ENCODE measurements at regions of chr7 and their contacts with region 1.

Region 1: GRCh38 chr7:66114793-66115649 is at the start of gene CRCP:
- DNase-seq: peak; percentile 77 to 82
- H3K4me3 ChIP-seq: peak within 1 kb of the TSS; percentile 83
- H3K27ac ChIP-seq: peak within 1 kb of the TSS; percentile 80
- H3K4me1 ChIP-seq: peaks cover 24% of the 10 kb centered on the region
- H3K27me3 ChIP-seq: no peaks in the 10 kb centered on the region
- CTCF ChIP-seq: no peak
- total RNA-seq, gene CRCP: 32.4 and 37.1 TPM in 2 replicates

Region 2: GRCh38 chr7:65981965-65982792 is 132.8 kb before region 1 on chr7 and contains the start of gene GUSB:
- CTCF ChIA-PET with region 1: no interaction called
- POLR2A ChIA-PET with region 1: no interaction called
- intact Hi-C with region 1: loop called (anchors 5 kb)
- DNase-seq: peak; percentile 72 to 91
- H3K4me3 ChIP-seq: peak within 1 kb of the TSS; percentile 80
- H3K27ac ChIP-seq: peak within 1 kb of the TSS; percentile 23; the same call in 1 of the 2 replicates
- H3K4me1 ChIP-seq: peaks cover 25% of the 10 kb centered on the region
- H3K27me3 ChIP-seq: no peaks in the 10 kb centered on the region
- CTCF ChIP-seq: no peak
- total RNA-seq, gene GUSB: 59.8 and 80.8 TPM in 2 replicates

Region 3: GRCh38 chr7:66043681-66044497 is 71.1 kb before region 1 on chr7:
- CTCF ChIA-PET with region 1: no interaction called
- POLR2A ChIA-PET with region 1: no interaction called
- intact Hi-C with region 1: loop called (anchors 2 kb)
- DNase-seq: peak in 1 of 2 experiments; percentile 73
- H3K4me3 ChIP-seq: peak overlapping the region; percentile 47; the same call in 1 of the 2 replicates
- H3K27ac ChIP-seq: no peak overlapping the region
- H3K4me1 ChIP-seq: peaks cover 13% of the 10 kb centered on the region
- H3K27me3 ChIP-seq: no peaks in the 10 kb centered on the region
- CTCF ChIP-seq: no peak

Region 4: GRCh38 chr7:66070222-66070621 is 44.8 kb before region 1 on chr7:
- CTCF ChIA-PET with region 1: no interaction called
- POLR2A ChIA-PET with region 1: interaction called, 13 read pairs
- intact Hi-C with region 1: no loop called
- DNase-seq: no peak
- H3K4me3 ChIP-seq: no peak overlapping the region
- H3K27ac ChIP-seq: no peak overlapping the region
- H3K4me1 ChIP-seq: no peaks in the 10 kb centered on the region
- H3K27me3 ChIP-seq: no peaks in the 10 kb centered on the region
- CTCF ChIP-seq: no peak

Region 5: GRCh38 chr7:66082083-66082482 is 32.9 kb before region 1 on chr7:
- CTCF ChIA-PET with region 1: no interaction called
- POLR2A ChIA-PET with region 1: interaction called, 25 read pairs
- intact Hi-C with region 1: no loop called
- DNase-seq: no peak
- H3K4me3 ChIP-seq: no peak overlapping the region
- H3K27ac ChIP-seq: no peak overlapping the region
- H3K4me1 ChIP-seq: peaks cover 1% of the 10 kb centered on the region; the same call in 1 of the 2 replicates
- H3K27me3 ChIP-seq: no peaks in the 10 kb centered on the region
- CTCF ChIP-seq: no peak

Region 6: DNA sequence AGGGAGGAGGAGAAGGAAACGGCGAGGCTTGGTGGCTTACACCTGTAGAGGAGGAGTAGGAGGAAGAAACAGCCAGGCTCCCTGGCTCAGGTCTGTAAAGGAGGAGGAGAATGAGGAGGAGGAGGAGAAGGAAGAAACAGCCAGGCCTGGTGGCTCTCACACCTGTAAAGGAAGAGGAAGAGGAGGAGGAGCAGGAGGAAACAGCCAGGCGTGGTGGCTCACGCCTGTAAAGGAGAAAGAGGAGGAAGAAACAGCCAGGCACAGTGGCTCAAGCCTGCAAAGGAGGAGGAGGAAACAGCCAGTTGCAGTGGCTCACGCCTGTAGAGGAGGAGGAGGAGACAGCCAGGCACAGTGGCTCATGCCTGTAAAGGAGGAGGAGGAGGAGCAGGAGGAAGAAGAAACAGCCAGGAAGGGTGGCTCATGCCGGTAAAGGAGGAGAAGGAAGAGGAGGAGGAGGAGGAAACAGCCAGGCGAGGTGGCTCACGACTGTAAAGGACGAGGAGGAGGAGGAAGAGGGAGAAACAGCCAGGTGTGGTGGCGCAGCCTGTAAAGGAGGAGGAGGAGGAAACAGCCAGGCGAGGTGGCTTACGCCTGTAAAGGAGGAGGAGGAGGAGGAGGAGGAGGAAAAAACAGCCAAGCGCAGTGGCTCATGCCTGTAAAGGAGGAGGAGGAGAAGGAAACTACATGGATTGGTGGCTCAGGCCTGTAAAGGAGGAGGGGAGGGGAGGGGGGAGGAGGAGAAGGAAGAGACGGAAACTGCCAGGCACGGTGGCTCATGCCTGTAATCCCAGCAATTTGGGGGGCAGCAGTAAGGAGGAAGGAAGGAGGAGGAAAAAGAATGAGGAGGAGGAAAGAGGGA is 15.2 kb before region 1 on chr7:
- CTCF ChIA-PET with region 1: no interaction called
- POLR2A ChIA-PET with region 1: interaction called, 11 read pairs
- intact Hi-C with region 1: no loop called
- DNase-seq: peak; percentile 85 to 89
- H3K4me3 ChIP-seq: peak overlapping the region; percentile 49; the same call in 1 of the 2 replicates
- H3K27ac ChIP-seq: peak overlapping the region; percentile 66
- H3K4me1 ChIP-seq: peaks cover 10% of the 10 kb centered on the region
- H3K27me3 ChIP-seq: no peaks in the 10 kb centered on the region
- CTCF ChIP-seq: no peak

Region 7: GRCh38 chr7:66125052-66125708 is 10.2 kb after region 1 on chr7:
- CTCF ChIA-PET with region 1: no interaction called
- POLR2A ChIA-PET with region 1: no interaction called
- intact Hi-C with region 1: no loop called
- DNase-seq: no peak
- H3K4me3 ChIP-seq: no peak overlapping the region
- H3K27ac ChIP-seq: no peak overlapping the region
- H3K4me1 ChIP-seq: no peaks in the 10 kb centered on the region
- H3K27me3 ChIP-seq: no peaks in the 10 kb centered on the region
- CTCF ChIP-seq: no peak